ENCODE measurements at regions of chr22 and their contacts with region 1.

Region 1: DNA sequence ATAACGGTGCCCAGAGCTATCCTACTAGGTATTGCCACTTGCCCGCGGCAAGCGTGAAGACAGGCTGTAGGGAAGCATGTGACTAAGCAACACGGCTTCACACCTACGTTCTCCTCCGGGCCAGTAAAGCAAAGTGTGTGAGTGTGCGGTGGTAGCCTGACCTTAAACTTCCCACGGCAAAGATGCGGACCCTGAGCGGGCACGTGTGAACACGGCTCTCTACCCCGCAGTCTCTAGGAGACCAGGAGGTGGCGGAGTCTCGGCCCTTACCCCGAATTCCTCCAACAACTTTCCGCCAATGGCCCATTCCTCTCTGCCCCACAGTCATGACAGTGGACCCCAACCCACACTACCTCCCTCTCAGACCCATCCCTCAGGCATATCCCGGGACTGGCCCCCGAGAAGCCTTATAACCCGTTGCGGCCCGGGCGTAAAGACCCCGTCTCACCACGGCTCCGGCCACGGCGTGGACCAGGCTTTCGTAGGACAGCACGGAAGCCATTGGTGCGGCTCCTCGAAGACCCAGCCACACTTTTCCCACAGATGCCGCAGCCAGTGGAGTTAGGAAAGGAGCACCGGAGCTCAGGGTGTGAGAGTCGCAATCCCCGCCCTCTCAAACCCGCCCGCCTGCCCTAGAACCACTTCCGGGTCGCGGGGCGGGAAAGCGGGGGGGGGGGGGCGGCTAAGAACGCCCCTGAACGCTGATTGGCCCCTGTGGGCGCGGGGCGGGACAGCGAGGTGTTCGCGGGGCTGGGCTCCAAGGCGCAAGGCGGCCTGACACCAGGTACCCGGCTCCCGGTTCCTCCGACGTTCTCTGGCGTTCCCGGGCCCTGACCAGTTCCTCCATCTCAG is at the start of gene SLC25A17:
- DNase-seq: peak; percentile 73 to 92 (median 85)
- ATAC-seq: peak; percentile 92 to 97 (median 94)
- H3K4me3 ChIP-seq: peak within 1 kb of the TSS; percentile 79 to 84
- H3K4me3 Mint-ChIP-seq: peak within 1 kb of the TSS; percentile 70 to 97 (median 94)
- H3K27ac ChIP-seq: peak within 1 kb of the TSS; percentile 32
- H3K27ac Mint-ChIP-seq: peak within 1 kb of the TSS; percentile 80 to 90
- H3K4me1 ChIP-seq: peaks cover 11 to 23% of the 10 kb centered on the region in 2 experiments
- H3K4me1 Mint-ChIP-seq: peaks cover 33 to 39% (median 39%) of the 10 kb centered on the region in 3 donors
- H3K27me3 ChIP-seq: no peaks in the 10 kb centered on the region
- H3K27me3 Mint-ChIP-seq: no peaks in the 10 kb centered on the region
- total RNA-seq, gene SLC25A17: 8.9 to 14.2 (median 12.7) TPM

Region 2: DNA sequence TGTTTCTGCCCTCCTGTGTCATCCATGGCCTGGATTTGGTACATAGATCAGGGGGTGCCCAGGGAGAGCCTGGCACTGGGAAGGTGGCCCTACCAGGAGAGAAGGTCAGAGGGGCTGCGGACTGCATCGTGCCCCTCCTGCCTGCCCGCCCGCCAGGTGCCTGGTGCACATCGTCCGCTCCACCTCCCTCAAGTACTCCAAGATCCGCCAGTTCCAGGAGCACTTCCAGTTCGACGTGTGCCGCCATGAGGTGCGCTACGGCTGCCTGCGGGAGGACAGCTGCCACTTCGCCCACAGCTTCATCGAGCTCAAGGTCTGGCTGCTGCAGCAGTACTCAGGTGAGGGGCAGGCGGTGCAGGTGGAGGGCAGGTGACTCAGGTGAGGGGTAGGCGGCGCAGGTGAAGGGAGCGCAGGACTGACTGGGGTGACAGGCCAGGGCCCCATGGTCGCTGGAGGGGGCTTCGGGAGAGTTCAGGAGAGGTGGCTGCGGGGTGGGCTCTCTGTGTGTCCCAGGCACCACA is 530.1 kb after region 1 on chr22:
- CTCF ChIA-PET with region 1: interaction called in 1 of 2 experiments, 13 read pairs
- POLR2A ChIA-PET with region 1: no interaction called
- DNase-seq: no peak
- ATAC-seq: no peak
- H3K4me3 ChIP-seq: no peak overlapping the region
- H3K4me3 Mint-ChIP-seq: no peak overlapping the region
- H3K27ac ChIP-seq: no peak overlapping the region
- H3K27ac Mint-ChIP-seq: no peak overlapping the region
- H3K4me1 ChIP-seq: no peaks in the 10 kb centered on the region
- H3K4me1 Mint-ChIP-seq: no peaks in the 10 kb centered on the region
- H3K27me3 ChIP-seq: no peaks in the 10 kb centered on the region
- H3K27me3 Mint-ChIP-seq: no peaks in the 10 kb centered on the region

Measured in T-cell (primary cell).